ENCODE measurements at regions of chr17 and their contacts with region 1.

Region 1: GRCh38 chr17:45218895-45219661 is 2.6 kb upstream of the FMNL1 start:
- DNase-seq: peak; percentile 74
- CTCF ChIP-seq: peak; percentile 94

Region 2: GRCh38 chr17:45235416-45236281 is 16.6 kb after region 1 on chr17:
- CTCF ChIA-PET with region 1: interaction called, 309 read pairs
- POLR2A ChIA-PET with region 1: interaction called, 3 read pairs
- DNase-seq: peak; percentile 76
- CTCF ChIP-seq: peak; percentile 72

Region 3: DNA sequence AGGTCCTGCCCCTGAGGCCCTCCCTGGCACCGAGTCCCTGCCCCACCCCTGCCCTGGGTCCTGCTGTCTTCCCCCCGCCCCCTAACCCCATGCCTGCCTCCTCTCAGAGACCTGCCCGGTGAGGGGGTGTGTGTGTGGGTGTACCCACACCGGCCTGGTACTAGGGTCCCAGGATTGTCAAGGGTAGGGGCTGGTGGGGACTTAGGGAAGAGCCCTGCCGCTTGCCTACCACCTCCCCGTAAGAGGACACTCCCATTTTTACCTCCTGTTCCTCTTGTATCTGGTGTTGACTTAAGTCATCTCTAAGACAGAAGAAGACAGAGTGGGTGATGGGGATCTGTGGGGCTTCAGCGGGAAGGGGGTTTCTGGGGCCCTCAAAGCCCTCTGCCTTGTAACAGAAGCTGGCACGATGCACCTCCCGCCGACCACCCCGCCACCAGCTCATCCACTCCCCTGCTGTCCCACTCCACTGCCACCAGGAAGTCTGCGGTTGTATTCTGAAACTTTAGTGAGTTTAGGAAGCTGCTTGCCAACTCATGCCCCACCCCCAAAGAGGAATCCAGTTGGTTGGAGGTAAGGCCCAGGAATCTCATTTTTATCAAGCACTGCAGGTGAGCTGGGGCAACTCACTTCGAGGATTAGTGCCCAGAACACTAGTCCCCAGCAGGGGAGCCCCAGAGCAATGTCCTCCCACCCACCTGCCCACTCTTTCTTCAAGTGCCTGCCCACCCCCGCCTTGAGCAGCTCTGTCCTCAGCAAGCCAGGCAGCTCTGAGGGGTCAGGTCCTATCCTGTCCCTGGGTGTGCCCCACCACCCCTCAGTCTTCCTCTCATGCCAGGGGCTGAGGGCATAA is 37.3 kb after region 1 on chr17:
- CTCF ChIA-PET with region 1: interaction called, 15 read pairs
- POLR2A ChIA-PET with region 1: no interaction called
- DNase-seq: no peak
- CTCF ChIP-seq: no peak

Region 4: GRCh38 chr17:45270828-45271418 is 51.8 kb after region 1 on chr17:
- CTCF ChIA-PET with region 1: interaction called, 32 read pairs
- POLR2A ChIA-PET with region 1: no interaction called
- DNase-seq: no peak
- CTCF ChIP-seq: peak; percentile 45